Dendritic cell treated with granulocyte-macrophage colony-stimulating factor and Interleukin-4, amounts not matched to agents 40 ng/mL and 50 ng/mL, for 4 days (primary cell): ENCODE measurements at regions of chr5 and their contacts with region 1.

Region 1: DNA sequence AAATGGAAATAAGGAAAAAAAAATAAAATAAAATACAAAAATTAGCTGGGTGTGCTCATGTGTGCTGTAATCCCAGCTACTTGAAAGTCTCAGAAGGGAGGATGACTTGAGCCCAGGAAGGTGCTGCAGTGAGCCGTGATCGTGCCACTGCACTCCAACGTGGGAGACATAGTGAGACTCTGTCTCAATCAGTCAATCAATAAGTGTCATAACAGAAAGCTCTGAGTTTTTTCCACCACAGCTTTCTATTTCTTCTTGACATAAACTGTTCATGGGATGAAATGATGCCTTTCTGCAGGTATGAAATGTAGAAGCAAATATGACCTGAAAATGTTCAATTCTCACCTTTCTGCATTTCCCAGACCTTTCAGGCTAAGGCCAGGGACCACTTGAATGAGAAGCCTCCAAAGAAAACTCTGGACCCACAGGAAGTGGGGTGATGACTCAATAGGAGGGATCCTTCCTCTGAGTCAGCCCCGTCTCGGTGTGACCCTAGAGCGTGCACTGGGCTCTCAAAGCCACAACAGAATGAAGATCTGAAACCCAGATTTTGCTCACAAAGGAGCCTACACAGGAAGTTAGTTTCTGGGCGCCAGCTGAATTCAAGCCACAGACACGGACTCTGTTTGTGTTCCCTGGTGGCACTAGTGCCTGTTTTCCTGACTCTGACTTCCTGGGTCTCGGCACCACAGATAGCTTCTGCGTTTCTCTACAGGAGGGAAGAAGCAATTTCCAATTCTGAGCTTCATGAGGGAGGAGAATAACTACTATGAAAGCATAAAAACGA is 62.0 kb downstream of the ANKH start:
- H3K4me3 Mint-ChIP-seq: peak overlapping the region; percentile 32
- H3K27ac Mint-ChIP-seq: peak overlapping the region; percentile 87
- H3K4me1 Mint-ChIP-seq: peaks cover 54% of the 10 kb centered on the region
- H3K27me3 Mint-ChIP-seq: no peaks in the 10 kb centered on the region

Region 2: GRCh38 chr5:14757850-14758249 is 51.7 kb before region 1 on chr5:
- intact Hi-C with region 1: loop called (anchors 5 kb)
- H3K4me3 Mint-ChIP-seq: peak overlapping the region; percentile 22
- H3K27ac Mint-ChIP-seq: peak overlapping the region; percentile 96
- H3K4me1 Mint-ChIP-seq: peaks cover 49% of the 10 kb centered on the region
- H3K27me3 Mint-ChIP-seq: no peaks in the 10 kb centered on the region